CD4-positive, alpha-beta T cell (primary cell): ENCODE measurements at regions of chr5 and their contacts with region 1.

Region 1: GRCh38 chr5:177351385-177352329 is at the start of gene LMAN2:
- DNase-seq: peak; percentile 83 to 96 (median 86)
- ATAC-seq: peak; percentile 99
- H3K4me3 ChIP-seq: peak within 1 kb of the TSS; percentile 95
- H3K4me3 Mint-ChIP-seq: peak within 1 kb of the TSS; percentile 95
- H3K27ac ChIP-seq: peak within 1 kb of the TSS; percentile 85 to 95
- H3K27ac Mint-ChIP-seq: peak within 1 kb of the TSS; percentile 98
- H3K4me1 ChIP-seq: peaks cover 63% of the 10 kb centered on the region
- H3K4me1 Mint-ChIP-seq: peaks cover 71% of the 10 kb centered on the region
- H3K27me3 ChIP-seq: no peaks in the 10 kb centered on the region
- H3K27me3 Mint-ChIP-seq: no peaks in the 10 kb centered on the region
- CTCF ChIP-seq: no peak
- total RNA-seq, gene LMAN2: 54.5 to 55.6 TPM

Region 2: GRCh38 chr5:176388444-176389134 is 963.1 kb before region 1 on chr5 and contains the starts of genes HIGD2A and NOP16:
- CTCF ChIA-PET with region 1: no interaction called
- POLR2A ChIA-PET with region 1: no interaction called
- intact Hi-C with region 1: loop called in 1 of 2 experiments (anchors 10 kb)
- DNase-seq: peak; percentile 96 to 100 (median 99)
- ATAC-seq: peak; percentile 87
- H3K4me3 ChIP-seq: peak within 1 kb of the TSS; percentile 79
- H3K4me3 Mint-ChIP-seq: peak within 1 kb of the TSS; percentile 98
- H3K27ac ChIP-seq: peak within 1 kb of the TSS; percentile 87 to 95
- H3K27ac Mint-ChIP-seq: peak within 1 kb of the TSS; percentile 97
- H3K4me1 ChIP-seq: peaks cover 33% of the 10 kb centered on the region
- H3K4me1 Mint-ChIP-seq: peaks cover 38% of the 10 kb centered on the region
- H3K27me3 ChIP-seq: no peaks in the 10 kb centered on the region
- H3K27me3 Mint-ChIP-seq: no peaks in the 10 kb centered on the region
- CTCF ChIP-seq: no peak
- total RNA-seq, gene HIGD2A: 98.2 to 104 TPM
- total RNA-seq, gene NOP16: 12.0 to 14.5 TPM

Region 3: DNA sequence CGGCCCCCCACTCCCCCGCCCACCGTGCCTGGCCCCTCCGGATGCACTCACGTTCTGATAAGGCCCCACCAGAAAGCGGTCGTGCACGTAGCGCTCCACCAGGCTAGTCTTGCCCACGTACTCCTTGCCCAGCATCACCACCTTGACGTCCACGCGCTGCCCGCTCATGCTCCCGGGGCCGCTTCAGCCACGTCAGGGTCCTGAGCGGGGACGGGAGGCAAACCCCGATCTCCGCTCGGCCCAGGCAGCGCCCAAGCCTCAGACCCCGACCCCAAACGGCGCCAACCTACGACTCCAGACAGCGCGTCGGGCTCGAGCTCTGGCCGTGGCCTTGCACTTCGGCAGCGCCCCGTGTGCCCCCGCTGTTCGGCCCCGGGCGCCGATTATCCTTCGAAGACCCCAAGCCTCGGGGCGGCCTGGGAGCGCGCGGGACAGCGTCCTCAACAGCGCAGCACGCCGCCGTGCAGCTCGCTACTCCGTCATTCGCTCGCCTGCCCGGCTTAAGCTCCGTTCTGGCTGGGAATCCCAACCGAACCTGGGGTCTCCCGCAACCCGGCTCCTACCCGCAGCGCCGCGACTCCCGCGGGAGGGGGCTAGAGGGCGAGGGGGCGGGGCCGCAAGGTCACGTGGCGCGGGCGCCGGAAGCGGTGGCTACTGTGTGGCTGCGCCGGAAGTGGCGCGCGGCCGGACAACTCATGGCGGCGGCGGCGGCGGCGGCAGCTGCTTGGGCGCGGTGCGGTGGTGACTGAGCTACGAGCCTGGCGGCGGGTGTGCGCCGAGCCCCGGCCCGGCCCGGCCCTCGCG is 48.3 kb before region 1 on chr5 and contains the starts of genes PRELID1 and RAB24:
- CTCF ChIA-PET with region 1: no interaction called
- POLR2A ChIA-PET with region 1: interaction called, 15 read pairs
- intact Hi-C with region 1: no loop called
- DNase-seq: peak; percentile 73 to 95 (median 86)
- ATAC-seq: peak; percentile 67
- H3K4me3 ChIP-seq: peak within 1 kb of the TSS; percentile 92
- H3K4me3 Mint-ChIP-seq: peak within 1 kb of the TSS; percentile 90
- H3K27ac ChIP-seq: peak within 1 kb of the TSS; percentile 60 to 78
- H3K27ac Mint-ChIP-seq: peak within 1 kb of the TSS; percentile 88
- H3K4me1 ChIP-seq: peaks cover 82% of the 10 kb centered on the region
- H3K4me1 Mint-ChIP-seq: peaks cover 81% of the 10 kb centered on the region
- H3K27me3 ChIP-seq: no peaks in the 10 kb centered on the region
- H3K27me3 Mint-ChIP-seq: no peaks in the 10 kb centered on the region
- CTCF ChIP-seq: peak; percentile 43
- total RNA-seq, gene PRELID1: 33.1 to 35.0 TPM
- total RNA-seq, gene RAB24: 17.0 to 18.0 TPM

Region 4: GRCh38 chr5:177336112-177336511 is 15.5 kb before region 1 on chr5:
- CTCF ChIA-PET with region 1: no interaction called
- POLR2A ChIA-PET with region 1: no interaction called
- intact Hi-C with region 1: no loop called
- DNase-seq: peak in 2 of 14 experiments; percentile 47 to 54
- ATAC-seq: peak; percentile 74
- H3K4me3 ChIP-seq: no peak overlapping the region
- H3K4me3 Mint-ChIP-seq: no peak overlapping the region
- H3K27ac ChIP-seq: no peak overlapping the region
- H3K27ac Mint-ChIP-seq: peak overlapping the region; percentile 12
- H3K4me1 ChIP-seq: peaks cover 6% of the 10 kb centered on the region
- H3K4me1 Mint-ChIP-seq: peaks cover 10% of the 10 kb centered on the region
- H3K27me3 ChIP-seq: no peaks in the 10 kb centered on the region
- H3K27me3 Mint-ChIP-seq: no peaks in the 10 kb centered on the region
- CTCF ChIP-seq: no peak

Region 5: GRCh38 chr5:177370488-177371119 is 18.9 kb after region 1 on chr5:
- CTCF ChIA-PET with region 1: interaction called, 31 read pairs
- POLR2A ChIA-PET with region 1: interaction called, 51 read pairs
- intact Hi-C with region 1: no loop called
- DNase-seq: peak in 12 of 14 experiments; percentile 29 to 90 (median 62)
- ATAC-seq: peak; percentile 74
- H3K4me3 ChIP-seq: peak overlapping the region; percentile 48
- H3K4me3 Mint-ChIP-seq: peak overlapping the region; percentile 42
- H3K27ac ChIP-seq: peak overlapping the region; percentile 23 to 27
- H3K27ac Mint-ChIP-seq: peak overlapping the region; percentile 33
- H3K4me1 ChIP-seq: peaks cover 82% of the 10 kb centered on the region
- H3K4me1 Mint-ChIP-seq: peaks cover 67% of the 10 kb centered on the region
- H3K27me3 ChIP-seq: no peaks in the 10 kb centered on the region
- H3K27me3 Mint-ChIP-seq: no peaks in the 10 kb centered on the region
- CTCF ChIP-seq: no peak

Region 6: DNA sequence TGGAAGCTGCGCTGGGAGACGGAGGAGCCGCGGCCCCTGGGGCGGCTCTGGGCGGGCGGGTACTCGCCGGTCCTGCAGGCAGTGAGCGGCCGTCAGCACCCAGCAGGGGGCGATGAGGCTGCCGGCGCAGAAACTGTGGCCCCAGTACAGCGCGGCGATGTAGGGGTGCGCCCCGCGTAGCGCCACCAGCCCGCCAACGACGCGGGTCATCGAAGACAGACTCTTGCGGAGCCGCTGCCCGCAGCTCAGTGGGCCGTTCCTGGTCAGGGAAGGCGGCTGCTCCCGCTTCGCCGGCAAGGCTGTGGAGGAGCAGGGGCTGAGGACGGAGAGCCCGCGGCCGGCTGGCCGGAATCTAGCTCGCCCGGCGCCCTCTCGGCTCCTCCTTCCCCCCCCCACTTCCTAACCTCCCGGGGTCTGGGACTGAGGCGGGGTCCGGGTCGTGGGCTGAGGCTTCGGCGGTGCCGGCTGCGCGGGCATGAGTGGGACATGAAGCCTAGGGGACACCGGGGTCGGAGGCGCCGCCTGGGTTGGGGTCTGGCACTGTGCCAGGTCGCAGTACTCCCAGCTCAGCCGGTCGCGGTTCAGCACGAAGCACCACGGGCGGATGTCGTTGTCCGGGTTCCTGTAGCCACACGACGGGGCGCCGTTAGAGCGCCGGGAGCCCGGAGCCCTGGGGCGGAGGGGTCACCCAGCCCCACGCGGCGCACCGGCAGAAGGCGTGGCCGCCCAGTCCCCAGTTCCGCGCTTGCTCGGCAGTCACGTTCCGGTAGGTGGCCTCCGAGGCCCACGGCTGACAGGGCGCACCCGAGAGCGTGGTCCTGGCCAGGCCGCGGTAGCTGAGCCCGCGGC is 52.4 kb after region 1 on chr5:
- CTCF ChIA-PET with region 1: interaction called, 4 read pairs
- POLR2A ChIA-PET with region 1: interaction called, 14 read pairs
- intact Hi-C with region 1: no loop called
- DNase-seq: peak; percentile 76 to 95 (median 84)
- ATAC-seq: peak; percentile 73
- H3K4me3 ChIP-seq: peak overlapping the region; percentile 59
- H3K4me3 Mint-ChIP-seq: peak overlapping the region; percentile 87
- H3K27ac ChIP-seq: no peak overlapping the region
- H3K27ac Mint-ChIP-seq: no peak overlapping the region
- H3K4me1 ChIP-seq: peaks cover 41% of the 10 kb centered on the region
- H3K4me1 Mint-ChIP-seq: peaks cover 26% of the 10 kb centered on the region
- H3K27me3 ChIP-seq: peaks cover 0 to 2% of the 10 kb centered on the region in 2 experiments
- H3K27me3 Mint-ChIP-seq: no peaks in the 10 kb centered on the region
- CTCF ChIP-seq: peak; percentile 74

Region 7: GRCh38 chr5:177454397-177455035 is 102.9 kb after region 1 on chr5:
- CTCF ChIA-PET with region 1: interaction called, 5 read pairs
- POLR2A ChIA-PET with region 1: interaction called, 13 read pairs
- intact Hi-C with region 1: no loop called
- DNase-seq: peak; percentile 87 to 97 (median 94)
- ATAC-seq: peak; percentile 45
- H3K4me3 ChIP-seq: peak overlapping the region; percentile 71
- H3K4me3 Mint-ChIP-seq: peak overlapping the region; percentile 89
- H3K27ac ChIP-seq: peak overlapping the region; percentile 90 to 95
- H3K27ac Mint-ChIP-seq: peak overlapping the region; percentile 93
- H3K4me1 ChIP-seq: peaks cover 52% of the 10 kb centered on the region
- H3K4me1 Mint-ChIP-seq: peaks cover 43% of the 10 kb centered on the region
- H3K27me3 ChIP-seq: no peaks in the 10 kb centered on the region
- H3K27me3 Mint-ChIP-seq: no peaks in the 10 kb centered on the region
- CTCF ChIP-seq: peak; percentile 79

Region 8: DNA sequence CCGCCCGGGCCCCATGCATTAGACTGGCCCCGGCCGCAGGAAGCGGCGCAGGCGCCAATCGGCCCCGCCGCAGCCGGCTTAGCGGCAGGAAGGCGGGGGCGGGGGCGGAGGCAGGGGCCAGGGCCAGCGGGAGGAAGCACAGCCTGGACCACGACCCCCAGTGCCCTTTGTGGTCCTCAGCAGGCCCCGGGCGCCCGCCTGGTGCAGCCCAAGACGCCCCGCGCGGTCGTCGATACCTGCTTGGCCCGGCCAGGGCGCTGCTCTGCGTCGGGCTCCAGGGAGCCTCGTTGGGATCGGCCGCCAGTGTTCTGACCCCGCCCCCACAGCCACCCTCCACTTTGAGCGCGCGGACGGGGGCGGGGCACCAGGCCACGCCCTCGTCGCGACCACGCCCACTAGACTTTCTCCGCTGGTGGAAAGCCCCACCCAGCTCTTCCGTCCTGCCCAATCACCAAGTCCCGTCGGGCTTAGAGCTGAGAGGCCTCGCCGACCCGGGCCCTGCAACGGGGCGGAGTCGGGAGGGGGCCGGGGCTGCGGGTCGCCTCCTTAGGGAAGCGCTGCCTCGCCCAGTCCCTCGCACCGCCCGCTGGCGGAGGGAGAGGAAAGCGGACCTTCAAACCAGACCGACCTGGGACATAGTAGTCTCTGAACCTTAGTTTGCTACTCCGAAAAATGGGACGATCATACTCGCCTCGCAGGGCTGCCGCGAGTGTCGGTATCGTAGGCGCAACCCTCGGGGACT is 145.8 kb after region 1 on chr5 and contains the start of gene PDLIM7:
- CTCF ChIA-PET with region 1: no interaction called
- POLR2A ChIA-PET with region 1: no interaction called
- intact Hi-C with region 1: no loop called
- DNase-seq: peak; percentile 87 to 98 (median 94)
- ATAC-seq: peak; percentile 89
- H3K4me3 ChIP-seq: peak within 1 kb of the TSS; percentile 70
- H3K4me3 Mint-ChIP-seq: peak within 1 kb of the TSS; percentile 74
- H3K27ac ChIP-seq: no peak within 1 kb of the TSS
- H3K27ac Mint-ChIP-seq: no peak within 1 kb of the TSS
- H3K4me1 ChIP-seq: peaks cover 50% of the 10 kb centered on the region
- H3K4me1 Mint-ChIP-seq: peaks cover 31% of the 10 kb centered on the region
- H3K27me3 ChIP-seq: no peaks in the 10 kb centered on the region
- H3K27me3 Mint-ChIP-seq: no peaks in the 10 kb centered on the region
- CTCF ChIP-seq: no peak
- total RNA-seq, gene PDLIM7: 5.2 to 6.0 TPM

Region 9: DNA sequence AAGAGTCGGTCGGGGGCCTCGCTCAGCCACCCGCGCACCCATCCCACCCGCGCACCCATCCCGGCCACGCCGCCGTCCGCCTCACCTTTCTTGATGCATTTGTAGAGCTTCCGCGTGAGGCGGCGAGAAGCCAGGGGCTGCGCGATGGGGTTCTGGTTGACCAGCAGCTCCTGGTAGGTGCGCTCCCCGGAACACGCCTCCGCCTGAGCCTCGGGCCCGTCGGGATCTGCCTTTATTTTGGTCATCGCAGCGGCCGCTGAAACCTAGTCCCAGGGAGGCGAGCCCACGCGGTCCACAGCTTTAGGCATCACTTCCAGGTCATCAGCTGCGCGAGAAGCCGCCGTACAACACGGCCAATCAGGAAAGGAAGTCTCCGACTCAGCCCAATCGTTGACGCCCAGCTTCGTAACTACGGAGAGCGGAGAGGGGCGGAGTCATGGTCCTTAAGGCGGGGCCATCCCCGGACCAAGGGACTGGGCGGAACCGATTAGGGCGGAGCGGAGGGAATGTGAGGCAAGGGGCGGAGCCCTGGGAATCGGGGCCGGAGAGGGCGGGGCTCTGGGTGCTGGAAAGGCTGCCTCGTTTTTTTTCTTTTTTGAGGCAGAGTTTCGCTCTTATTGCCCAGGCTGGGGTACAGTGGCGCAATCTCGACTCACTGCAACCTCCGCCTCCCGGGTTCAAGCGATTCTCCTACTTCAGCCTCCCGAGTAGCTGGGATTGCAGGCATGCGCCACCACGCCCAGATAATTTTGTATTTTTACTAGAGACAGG is 802.1 kb after region 1 on chr5 and contains the start of gene NHP2:
- CTCF ChIA-PET with region 1: no interaction called
- POLR2A ChIA-PET with region 1: no interaction called
- intact Hi-C with region 1: loop called in 1 of 2 experiments (anchors 5 kb)
- DNase-seq: peak; percentile 94 to 100 (median 97)
- ATAC-seq: peak; percentile 98
- H3K4me3 ChIP-seq: peak within 1 kb of the TSS; percentile 76
- H3K4me3 Mint-ChIP-seq: peak within 1 kb of the TSS; percentile 91
- H3K27ac ChIP-seq: peak within 1 kb of the TSS; percentile 28 to 29
- H3K27ac Mint-ChIP-seq: peak within 1 kb of the TSS; percentile 83
- H3K4me1 ChIP-seq: peaks cover 35% of the 10 kb centered on the region
- H3K4me1 Mint-ChIP-seq: peaks cover 24% of the 10 kb centered on the region
- H3K27me3 ChIP-seq: no peaks in the 10 kb centered on the region
- H3K27me3 Mint-ChIP-seq: no peaks in the 10 kb centered on the region
- CTCF ChIP-seq: no peak
- total RNA-seq, gene NHP2: 42.2 to 44.5 TPM